Activated CD4-positive, alpha-beta T cell treated with anti-CD3 and anti-CD28 coated beads for 36 hours (primary cell): ENCODE measurements at regions of chr19 and their contacts with region 1.

Region 1: GRCh38 chr19:45862564-45863334 is at the start of gene SYMPK:
- DNase-seq: peak; percentile 100
- ATAC-seq: peak; percentile 96
- H3K4me3 Mint-ChIP-seq: peak within 1 kb of the TSS; percentile 87
- H3K27ac Mint-ChIP-seq: peak within 1 kb of the TSS; percentile 95
- H3K4me1 Mint-ChIP-seq: peaks cover 31% of the 10 kb centered on the region
- H3K27me3 Mint-ChIP-seq: peaks cover 17% of the 10 kb centered on the region
- total RNA-seq, gene SYMPK: 108 to 128 TPM

Region 2: DNA sequence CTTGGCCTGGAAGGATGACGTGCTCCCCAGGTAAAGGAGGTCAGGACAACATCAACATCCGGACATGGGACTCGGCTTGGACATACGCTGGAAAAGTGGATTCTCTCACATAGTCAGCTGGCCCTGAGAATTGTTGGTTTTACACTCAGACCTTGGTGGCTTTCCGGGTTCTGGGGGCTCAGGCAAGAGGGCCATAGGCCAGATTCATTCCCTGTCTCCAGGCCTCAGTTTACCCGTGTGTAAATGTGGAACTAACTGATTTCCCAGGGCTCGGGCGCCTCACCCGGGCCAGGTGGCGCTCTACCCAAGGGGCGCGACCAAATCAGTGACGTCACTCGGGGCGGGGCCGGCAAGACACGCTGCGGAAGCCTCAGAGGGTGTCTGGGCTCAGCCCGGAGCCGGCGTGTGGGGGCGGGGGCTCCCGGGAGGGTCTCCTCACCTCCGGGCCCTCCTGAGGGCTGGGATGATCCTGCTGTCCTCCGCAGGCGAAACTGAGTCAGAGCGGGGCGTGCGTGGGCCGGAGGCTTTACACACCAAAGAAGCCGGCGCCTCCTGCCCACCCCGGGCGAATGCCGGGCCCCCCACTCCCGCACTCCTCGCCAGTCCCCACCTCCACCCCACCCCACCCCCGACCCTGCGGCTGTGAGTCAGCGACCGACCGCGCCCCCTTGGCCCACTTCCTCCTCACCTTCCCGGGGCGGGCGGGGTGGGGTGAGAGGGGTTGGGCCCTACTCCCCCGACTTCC is 356.3 kb before region 1 on chr19:
- CTCF ChIA-PET with region 1: no interaction called
- POLR2A ChIA-PET with region 1: no interaction called
- intact Hi-C with region 1: loop called in 1 of 2 experiments (anchors 2 kb)
- DNase-seq: peak; percentile 100
- ATAC-seq: peak; percentile 80
- H3K4me3 Mint-ChIP-seq: peak overlapping the region; percentile 85
- H3K27ac Mint-ChIP-seq: peak overlapping the region; percentile 96
- H3K4me1 Mint-ChIP-seq: peaks cover 38% of the 10 kb centered on the region
- H3K27me3 Mint-ChIP-seq: no peaks in the 10 kb centered on the region

Region 3: GRCh38 chr19:45730389-45731288 is 132.1 kb before region 1 on chr19 and contains the start of gene FBXO46:
- CTCF ChIA-PET with region 1: interaction called, 3 read pairs
- POLR2A ChIA-PET with region 1: no interaction called
- intact Hi-C with region 1: loop called in 1 of 2 experiments (anchors 1 kb)
- DNase-seq: peak; percentile 97
- ATAC-seq: peak; percentile 99
- H3K4me3 Mint-ChIP-seq: peak within 1 kb of the TSS; percentile 88
- H3K27ac Mint-ChIP-seq: peak within 1 kb of the TSS; percentile 90
- H3K4me1 Mint-ChIP-seq: peaks cover 35% of the 10 kb centered on the region
- H3K27me3 Mint-ChIP-seq: no peaks in the 10 kb centered on the region
- total RNA-seq, gene FBXO46: 32.3 to 43.3 TPM

Region 4: GRCh38 chr19:45817010-45817724 is 45.6 kb before region 1 on chr19:
- CTCF ChIA-PET with region 1: interaction called, 9 read pairs
- POLR2A ChIA-PET with region 1: no interaction called
- intact Hi-C with region 1: loop called in 1 of 2 experiments (anchors 1 kb)
- DNase-seq: peak; percentile 99
- ATAC-seq: peak; percentile 100
- H3K4me3 Mint-ChIP-seq: no peak overlapping the region
- H3K27ac Mint-ChIP-seq: no peak overlapping the region
- H3K4me1 Mint-ChIP-seq: peaks cover 7% of the 10 kb centered on the region
- H3K27me3 Mint-ChIP-seq: peaks cover 10% of the 10 kb centered on the region

Region 5: DNA sequence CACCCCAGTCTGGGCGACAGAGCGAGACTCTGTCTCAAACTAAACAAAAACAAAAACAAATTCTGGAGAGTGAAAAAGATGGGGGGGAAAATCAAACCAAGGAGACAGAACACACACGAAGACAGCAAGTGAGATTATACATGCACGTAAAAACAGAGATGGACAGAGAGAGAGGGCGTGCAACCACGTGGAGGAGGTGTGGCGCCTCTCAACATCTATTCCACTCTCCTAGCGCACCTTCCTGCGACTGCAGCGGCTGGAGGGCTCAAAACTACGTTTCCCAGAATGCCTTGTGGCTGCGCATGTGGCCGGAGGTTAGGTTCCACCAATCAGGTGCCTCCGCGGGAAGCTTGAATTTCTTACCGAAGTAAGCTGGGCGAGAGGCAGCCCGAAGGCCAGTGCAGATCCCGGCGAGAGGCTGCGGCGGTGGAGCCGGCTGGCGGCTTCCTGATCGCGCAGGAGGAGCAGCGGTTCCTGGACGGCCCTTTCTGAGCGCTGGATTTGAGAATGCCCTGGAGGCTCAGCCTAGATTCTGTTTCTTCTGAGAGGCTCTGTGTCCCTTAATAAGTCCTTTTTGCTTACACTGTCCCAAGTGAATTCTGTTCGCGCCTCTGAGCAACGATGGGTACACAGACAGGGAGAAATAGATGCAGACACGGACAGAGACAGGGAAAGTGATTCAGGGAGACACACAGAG is 65.0 kb after region 1 on chr19:
- CTCF ChIA-PET with region 1: no interaction called
- POLR2A ChIA-PET with region 1: no interaction called
- intact Hi-C with region 1: loop called in 1 of 2 experiments (anchors 1 kb)
- DNase-seq: peak; percentile 96
- ATAC-seq: peak; percentile 100
- H3K4me3 Mint-ChIP-seq: peak overlapping the region; percentile 56
- H3K27ac Mint-ChIP-seq: peak overlapping the region; percentile 68
- H3K4me1 Mint-ChIP-seq: peaks cover 12% of the 10 kb centered on the region
- H3K27me3 Mint-ChIP-seq: peaks cover 7% of the 10 kb centered on the region

Region 6: DNA sequence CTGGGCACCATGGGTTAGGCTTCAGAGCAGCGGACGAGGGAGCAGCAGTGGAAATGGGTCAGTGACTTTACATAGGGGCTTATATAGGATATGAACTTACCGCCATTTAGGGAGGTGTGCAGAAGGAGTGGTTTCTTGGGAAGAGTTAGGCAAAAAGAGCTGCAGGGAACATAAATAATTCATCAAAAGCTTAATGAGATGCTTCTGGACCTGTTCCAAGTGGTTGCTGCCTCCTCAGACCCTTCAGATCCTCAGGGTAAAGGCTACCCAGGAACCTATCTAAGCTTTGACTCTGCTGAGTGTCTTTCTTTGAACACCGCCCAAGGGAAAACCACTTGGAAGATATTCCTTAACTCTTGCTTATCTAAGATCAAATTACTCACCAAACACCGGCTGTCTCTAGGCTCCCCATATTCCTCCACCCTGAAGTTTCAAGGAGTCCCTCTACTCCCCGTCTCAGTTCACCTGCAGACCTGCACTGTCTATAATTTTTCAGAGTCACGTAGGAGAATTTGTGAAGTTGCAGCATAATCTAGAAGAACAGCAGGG is 178.3 kb after region 1 on chr19 and contains the start of gene IGFL4:
- CTCF ChIA-PET with region 1: no interaction called
- POLR2A ChIA-PET with region 1: no interaction called
- intact Hi-C with region 1: no loop called
- DNase-seq: no peak
- ATAC-seq: no peak
- H3K4me3 Mint-ChIP-seq: no peak within 1 kb of the TSS
- H3K27ac Mint-ChIP-seq: no peak within 1 kb of the TSS
- H3K4me1 Mint-ChIP-seq: no peaks in the 10 kb centered on the region
- H3K27me3 Mint-ChIP-seq: peaks cover 41% of the 10 kb centered on the region
- total RNA-seq, gene IGFL4: not detected

Region 7: GRCh38 chr19:46346821-46347571 is 484.2 kb after region 1 on chr19 and contains the start of gene PPP5C:
- CTCF ChIA-PET with region 1: no interaction called
- POLR2A ChIA-PET with region 1: no interaction called
- intact Hi-C with region 1: loop called in 1 of 2 experiments (anchors 5 kb)
- DNase-seq: peak; percentile 94
- ATAC-seq: peak; percentile 74
- H3K4me3 Mint-ChIP-seq: peak within 1 kb of the TSS; percentile 90
- H3K27ac Mint-ChIP-seq: peak within 1 kb of the TSS; percentile 91
- H3K4me1 Mint-ChIP-seq: peaks cover 41% of the 10 kb centered on the region
- H3K27me3 Mint-ChIP-seq: no peaks in the 10 kb centered on the region
- total RNA-seq, gene PPP5C: 100.0 to 129 TPM